ENCODE measurements at regions of chr3 and their contacts with region 1.

Region 1: GRCh38 chr3:151316267-151316991 is at the start of gene GPR87:
- DNase-seq: peak; percentile 63 to 98
- H3K4me3 ChIP-seq: peak within 1 kb of the TSS; percentile 57
- H3K27ac ChIP-seq: peak within 1 kb of the TSS; percentile 93
- H3K4me1 ChIP-seq: peaks cover 53% of the 10 kb centered on the region
- H3K27me3 ChIP-seq: no peaks in the 10 kb centered on the region
- CTCF ChIP-seq: no peak
- total RNA-seq, gene GPR87: 9.0 and 15.5 TPM in 2 replicates

Region 2: GRCh38 chr3:151327571-151328198 is 11.3 kb after region 1 on chr3:
- CTCF ChIA-PET with region 1: interaction called, 3 read pairs
- POLR2A ChIA-PET with region 1: interaction called, 18 read pairs
- intact Hi-C with region 1: no loop called
- DNase-seq: no peak
- H3K4me3 ChIP-seq: no peak overlapping the region
- H3K27ac ChIP-seq: 0 out of 2 replicates have a peak overlapping the region, but pooled peaks have one; percentile 14
- H3K4me1 ChIP-seq: peaks cover 14% of the 10 kb centered on the region
- H3K27me3 ChIP-seq: no peaks in the 10 kb centered on the region
- CTCF ChIP-seq: peak; percentile 81

Region 3: GRCh38 chr3:151460774-151461450 is 144.5 kb after region 1 on chr3 and contains the start of gene IGSF10:
- CTCF ChIA-PET with region 1: no interaction called
- POLR2A ChIA-PET with region 1: interaction called, 10 read pairs
- intact Hi-C with region 1: no loop called
- DNase-seq: peak in 1 of 2 experiments; percentile 18
- H3K4me3 ChIP-seq: peak within 1 kb of the TSS; percentile 72
- H3K27ac ChIP-seq: no peak within 1 kb of the TSS
- H3K4me1 ChIP-seq: 0 out of 2 replicates have a peak, but pooled peaks cover 6% of the 10 kb centered on the region
- H3K27me3 ChIP-seq: no peaks in the 10 kb centered on the region
- CTCF ChIP-seq: no peak
- total RNA-seq, gene IGSF10: 0.25 and 0.55 TPM in 2 replicates

Region 4: GRCh38 chr3:151638555-151639417 is 322.4 kb after region 1 on chr3:
- CTCF ChIA-PET with region 1: no interaction called
- POLR2A ChIA-PET with region 1: no interaction called
- intact Hi-C with region 1: no loop called
- DNase-seq: no peak
- H3K4me3 ChIP-seq: no peak overlapping the region
- H3K27ac ChIP-seq: no peak overlapping the region
- H3K4me1 ChIP-seq: no peaks in the 10 kb centered on the region
- H3K27me3 ChIP-seq: no peaks in the 10 kb centered on the region
- CTCF ChIP-seq: no peak

Region 5: GRCh38 chr3:151795276-151795675 is 478.8 kb after region 1 on chr3:
- CTCF ChIA-PET with region 1: no interaction called
- POLR2A ChIA-PET with region 1: no interaction called
- intact Hi-C with region 1: no loop called
- DNase-seq: no peak
- H3K4me3 ChIP-seq: no peak overlapping the region
- H3K27ac ChIP-seq: no peak overlapping the region
- H3K4me1 ChIP-seq: peaks cover 16% of the 10 kb centered on the region; the same call in 1 of the 2 replicates
- H3K27me3 ChIP-seq: no peaks in the 10 kb centered on the region
- CTCF ChIP-seq: no peak

Region 6: GRCh38 chr3:152193673-152194267 is 877.3 kb after region 1 on chr3:
- CTCF ChIA-PET with region 1: no interaction called
- POLR2A ChIA-PET with region 1: no interaction called
- intact Hi-C with region 1: no loop called
- DNase-seq: no peak
- H3K4me3 ChIP-seq: no peak overlapping the region
- H3K27ac ChIP-seq: no peak overlapping the region
- H3K4me1 ChIP-seq: no peaks in the 10 kb centered on the region
- H3K27me3 ChIP-seq: no peaks in the 10 kb centered on the region
- CTCF ChIP-seq: no peak